ENCODE measurements at regions of chr4 and their contacts with region 1.

Region 1: GRCh38 chr4:150164956-150165629 is 86.8 kb downstream of the DCLK2 start:
- DNase-seq: no peak
- ATAC-seq: no peak
- H3K4me3 ChIP-seq: no peak overlapping the region
- H3K27ac ChIP-seq: peak overlapping the region in 3 of 10 donors; percentile 13 to 51 (median 46)
- H3K4me1 ChIP-seq: peaks cover 5 to 44% (median 25%) of the 10 kb centered on the region in 9 donors
- H3K27me3 ChIP-seq: no peaks in the 10 kb centered on the region
- CTCF ChIP-seq: no peak

Region 2: GRCh38 chr4:150126201-150126863 is 38.8 kb before region 1 on chr4:
- intact Hi-C with region 1: loop called in 1 of 10 experiments (anchors 1 kb)
- DNase-seq: peak in 1 of 2 donors; percentile 21
- ATAC-seq: peak in 6 of 8 donors; percentile 55 to 80 (median 77)
- H3K4me3 ChIP-seq: no peak overlapping the region
- H3K27ac ChIP-seq: peak overlapping the region in 3 of 10 donors; percentile 1 to 27 (median 9)
- H3K4me1 ChIP-seq: peaks cover 4 to 36% (median 18%) of the 10 kb centered on the region in 9 donors
- H3K27me3 ChIP-seq: no peaks in the 10 kb centered on the region
- CTCF ChIP-seq: no peak

Region 3: GRCh38 chr4:150224896-150225591 is 60.0 kb after region 1 on chr4:
- intact Hi-C with region 1: no loop called
- DNase-seq: no peak
- ATAC-seq: peak in 3 of 8 donors; percentile 50 to 69 (median 53)
- H3K4me3 ChIP-seq: no peak overlapping the region
- H3K27ac ChIP-seq: no peak overlapping the region
- H3K4me1 ChIP-seq: peaks cover 0 to 32% (median 10%) of the 10 kb centered on the region in 9 donors
- H3K27me3 ChIP-seq: no peaks in the 10 kb centered on the region
- CTCF ChIP-seq: no peak

Region 4: GRCh38 chr4:150385606-150386005 is 220.5 kb after region 1 on chr4:
- intact Hi-C with region 1: no loop called
- DNase-seq: peak in 1 of 2 donors; percentile 8
- ATAC-seq: peak; percentile 21 to 92 (median 65)
- H3K4me3 ChIP-seq: no peak overlapping the region
- H3K27ac ChIP-seq: no peak overlapping the region
- H3K4me1 ChIP-seq: peaks cover 0 to 12% (median 0%) of the 10 kb centered on the region in 9 donors
- H3K27me3 ChIP-seq: no peaks in the 10 kb centered on the region
- CTCF ChIP-seq: no peak

Measured in heart right ventricle (tissue), 16 donors.